Left colon (tissue), 2 donors: ENCODE measurements at regions of chr10 and their contacts with region 1.

Region 1: DNA sequence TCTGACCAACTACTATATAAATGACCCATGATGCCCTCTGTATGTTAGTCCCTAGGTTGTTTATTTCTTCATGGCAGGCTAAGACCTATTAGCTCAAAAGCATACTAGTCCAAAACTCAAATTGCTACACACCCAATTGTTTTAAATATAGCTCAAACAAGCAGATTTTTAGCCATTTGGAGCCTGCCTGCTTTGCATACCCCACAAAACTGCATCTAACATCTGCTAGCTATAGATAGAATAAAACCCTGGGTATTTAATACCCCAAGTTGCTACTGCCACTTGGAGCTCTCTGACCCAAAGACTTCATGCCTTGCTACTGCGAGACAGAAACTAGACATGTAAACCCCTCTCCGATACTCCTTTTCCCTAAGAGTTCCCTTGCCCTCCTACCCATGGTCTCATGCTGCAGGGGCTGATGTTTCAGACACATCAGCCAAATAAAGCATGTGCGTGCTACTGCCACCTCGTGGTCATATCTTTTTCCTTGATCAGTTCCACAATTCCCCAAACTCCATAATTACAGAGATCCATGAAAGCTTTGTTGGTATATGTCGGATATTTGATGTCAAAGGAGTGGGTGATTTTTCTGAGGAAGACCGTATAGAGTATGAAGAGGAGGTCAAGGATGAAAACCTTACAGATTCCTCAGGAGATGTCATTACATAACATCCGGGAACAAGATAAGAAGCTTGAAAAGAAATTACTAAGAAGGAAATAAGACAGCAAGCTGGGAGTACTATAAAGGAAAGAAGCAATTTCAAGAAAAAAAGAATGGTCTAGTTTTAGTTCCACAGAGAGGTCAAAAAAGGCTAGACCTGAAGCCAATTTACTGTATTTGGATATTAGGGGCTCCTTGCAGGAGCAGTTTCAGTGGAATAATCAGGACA is 386.6 kb downstream of the SH2D4B start:
- DNase-seq: peak in 1 of 2 donors; percentile 52
- ATAC-seq: peak; percentile 62

Region 2: DNA sequence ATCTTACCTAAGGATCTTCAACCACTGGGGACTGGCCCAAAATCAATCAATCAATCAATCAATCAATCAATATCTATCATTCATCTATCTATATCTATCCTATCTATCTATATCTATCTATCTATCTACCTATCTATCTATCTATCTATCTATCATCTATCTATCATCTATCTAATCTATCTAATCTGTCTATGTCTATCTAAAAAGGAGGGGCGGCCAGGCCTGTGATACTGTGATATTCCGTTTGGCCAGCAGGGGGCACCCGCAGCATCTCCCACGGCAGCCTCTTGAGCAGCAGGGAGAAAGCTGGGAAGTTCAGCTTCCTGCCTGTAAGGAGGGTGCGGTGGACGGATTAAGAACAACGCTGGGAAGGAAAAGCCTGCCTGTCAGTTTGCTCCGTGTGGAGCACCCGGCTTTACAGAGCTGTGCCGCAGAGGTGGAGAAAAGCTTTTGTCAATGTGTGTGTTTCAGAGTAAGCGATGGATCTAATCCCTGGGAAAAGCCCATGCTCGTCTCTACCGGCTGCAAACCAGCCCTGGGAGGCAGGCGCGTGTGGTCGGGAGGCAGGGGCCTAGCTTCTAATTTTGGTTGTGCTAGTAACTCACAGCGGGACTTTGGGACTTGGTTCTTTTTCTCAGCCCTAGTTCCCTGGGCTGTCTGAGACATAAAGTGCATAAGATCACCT is 261.6 kb before region 1 on chr10:
- intact Hi-C with region 1: loop called in 1 of 2 experiments (anchors 10 kb)
- DNase-seq: peak; percentile 69 to 84
- ATAC-seq: peak; percentile 91

Region 3: GRCh38 chr10:81031774-81032173 is 107.5 kb after region 1 on chr10:
- intact Hi-C with region 1: no loop called
- DNase-seq: no peak
- ATAC-seq: no peak